ENCODE measurements at regions of chr3 and their contacts with region 1.

Region 1: DNA sequence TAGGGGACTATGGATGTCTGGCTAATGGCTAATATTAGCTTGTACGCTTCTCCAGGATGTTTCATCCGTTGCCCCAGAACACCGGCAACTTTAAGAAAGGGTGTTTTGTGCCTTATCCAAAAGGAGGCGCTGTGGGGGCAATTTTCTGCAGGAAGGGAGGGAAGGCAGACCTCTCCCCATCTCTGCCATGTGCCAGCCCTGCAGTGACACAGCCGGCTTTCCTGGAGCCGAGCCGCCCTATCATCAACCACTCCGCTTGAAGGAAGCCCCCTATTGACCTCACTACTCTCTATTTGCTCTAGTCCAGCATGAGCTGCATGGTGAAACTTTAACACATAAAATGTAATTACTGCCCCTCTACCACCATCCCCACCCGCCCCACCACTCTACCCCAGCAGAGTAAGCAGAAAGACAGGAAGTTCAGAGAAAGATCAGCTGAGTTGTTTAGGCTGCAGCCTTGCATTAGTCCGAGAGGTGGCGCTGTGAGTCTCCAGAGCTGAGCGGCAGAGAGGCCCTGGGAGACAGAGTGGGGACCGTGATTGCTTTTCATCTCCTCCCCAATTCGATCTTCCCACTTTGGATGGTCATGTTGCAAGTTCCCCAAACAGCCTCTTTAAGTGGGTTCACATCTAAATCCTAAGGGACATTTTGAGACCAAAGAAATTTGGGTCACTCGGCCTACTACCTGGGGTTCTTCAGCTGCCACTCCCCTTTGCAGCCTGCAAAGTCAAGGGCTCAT is 24.5 kb upstream of the RAD18 start:
- DNase-seq: peak; percentile 64 to 87 (median 82)
- H3K4me3 ChIP-seq: peak overlapping the region in 2 of 7 experiments; percentile 30 to 62
- H3K27ac ChIP-seq: no peak overlapping the region
- H3K4me1 ChIP-seq: peaks cover 0 to 6% (median 4%) of the 10 kb centered on the region in 4 experiments
- H3K27me3 ChIP-seq: no peaks in the 10 kb centered on the region

Region 2: GRCh38 chr3:8579096-8579495 is 408.7 kb before region 1 on chr3:
- CTCF ChIA-PET with region 1: no interaction called
- POLR2A ChIA-PET with region 1: no interaction called
- DNase-seq: peak; percentile 8 to 71 (median 50)
- H3K4me3 ChIP-seq: no peak overlapping the region
- H3K27ac ChIP-seq: no peak overlapping the region
- H3K4me1 ChIP-seq: peaks cover 0 to 6% (median 0%) of the 10 kb centered on the region in 4 experiments
- H3K27me3 ChIP-seq: no peaks in the 10 kb centered on the region

Region 3: DNA sequence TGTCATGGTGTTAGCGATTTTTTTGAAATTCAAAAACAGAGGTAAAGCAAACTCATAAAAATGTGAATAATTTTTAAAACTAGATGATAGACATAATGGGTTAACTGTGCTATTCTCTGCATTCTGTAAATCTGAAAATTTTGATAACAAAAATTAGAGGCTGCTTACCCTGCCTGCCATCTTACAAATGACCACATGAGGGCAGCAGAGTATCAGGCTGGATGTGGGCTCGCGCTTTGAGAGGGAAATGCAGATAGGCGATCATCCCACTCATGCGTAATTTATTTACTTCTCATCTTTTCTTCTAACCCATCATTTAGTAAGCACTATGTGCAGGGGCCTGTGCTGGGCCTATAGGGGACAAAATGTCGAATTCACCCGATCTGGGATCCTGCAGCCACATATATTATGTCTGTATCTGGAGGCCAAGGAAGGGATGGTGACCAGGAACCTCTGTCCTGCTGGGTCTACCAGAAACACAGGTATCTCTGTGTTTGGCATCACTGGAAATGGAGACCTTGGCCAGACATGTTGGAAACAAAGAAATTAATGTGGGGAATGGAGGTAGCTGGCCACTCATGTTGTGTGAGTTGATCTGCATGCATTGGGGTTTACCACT is 16.7 kb before region 1 on chr3:
- CTCF ChIA-PET with region 1: interaction called, 21 read pairs
- POLR2A ChIA-PET with region 1: no interaction called
- DNase-seq: peak; percentile 61 to 84 (median 76)
- H3K4me3 ChIP-seq: no peak overlapping the region
- H3K27ac ChIP-seq: no peak overlapping the region
- H3K4me1 ChIP-seq: no peaks in the 10 kb centered on the region
- H3K27me3 ChIP-seq: peaks cover 0 to 14% (median 3%) of the 10 kb centered on the region in 5 experiments

Region 4: GRCh38 chr3:9249273-9250192 is 261.7 kb after region 1 on chr3 and contains the start of gene SRGAP3:
- CTCF ChIA-PET with region 1: interaction called, 11 read pairs
- POLR2A ChIA-PET with region 1: no interaction called
- DNase-seq: peak; percentile 90 to 97 (median 96)
- H3K4me3 ChIP-seq: peak within 1 kb of the TSS; percentile 68 to 94 (median 76)
- H3K27ac ChIP-seq: no peak within 1 kb of the TSS
- H3K4me1 ChIP-seq: peaks cover 12 to 33% (median 27%) of the 10 kb centered on the region in 4 experiments
- H3K27me3 ChIP-seq: no peaks in the 10 kb centered on the region

Region 5: GRCh38 chr3:9302425-9303181 is 314.8 kb after region 1 on chr3:
- CTCF ChIA-PET with region 1: interaction called, 90 read pairs
- POLR2A ChIA-PET with region 1: no interaction called
- DNase-seq: peak; percentile 85 to 93 (median 92)
- H3K4me3 ChIP-seq: peak overlapping the region in 4 of 7 experiments; percentile 26 to 57 (median 39)
- H3K27ac ChIP-seq: no peak overlapping the region
- H3K4me1 ChIP-seq: peaks cover 0 to 4% (median 2%) of the 10 kb centered on the region in 4 experiments
- H3K27me3 ChIP-seq: peaks cover 0 to 7% (median 0%) of the 10 kb centered on the region in 5 experiments

Measured in common myeloid progenitor, CD34-positive (primary cell).